ENCODE measurements at regions of chr6 and their contacts with region 1.

Region 1: GRCh38 chr6:90940812-90941481 is 354.1 kb upstream of the MAP3K7 start:
- DNase-seq: peak; percentile 10
- H3K4me3 Mint-ChIP-seq: no peak overlapping the region
- H3K27ac Mint-ChIP-seq: no peak overlapping the region
- H3K4me1 Mint-ChIP-seq: peaks cover 5% of the 10 kb centered on the region
- H3K27me3 Mint-ChIP-seq: no peaks in the 10 kb centered on the region

Region 2: DNA sequence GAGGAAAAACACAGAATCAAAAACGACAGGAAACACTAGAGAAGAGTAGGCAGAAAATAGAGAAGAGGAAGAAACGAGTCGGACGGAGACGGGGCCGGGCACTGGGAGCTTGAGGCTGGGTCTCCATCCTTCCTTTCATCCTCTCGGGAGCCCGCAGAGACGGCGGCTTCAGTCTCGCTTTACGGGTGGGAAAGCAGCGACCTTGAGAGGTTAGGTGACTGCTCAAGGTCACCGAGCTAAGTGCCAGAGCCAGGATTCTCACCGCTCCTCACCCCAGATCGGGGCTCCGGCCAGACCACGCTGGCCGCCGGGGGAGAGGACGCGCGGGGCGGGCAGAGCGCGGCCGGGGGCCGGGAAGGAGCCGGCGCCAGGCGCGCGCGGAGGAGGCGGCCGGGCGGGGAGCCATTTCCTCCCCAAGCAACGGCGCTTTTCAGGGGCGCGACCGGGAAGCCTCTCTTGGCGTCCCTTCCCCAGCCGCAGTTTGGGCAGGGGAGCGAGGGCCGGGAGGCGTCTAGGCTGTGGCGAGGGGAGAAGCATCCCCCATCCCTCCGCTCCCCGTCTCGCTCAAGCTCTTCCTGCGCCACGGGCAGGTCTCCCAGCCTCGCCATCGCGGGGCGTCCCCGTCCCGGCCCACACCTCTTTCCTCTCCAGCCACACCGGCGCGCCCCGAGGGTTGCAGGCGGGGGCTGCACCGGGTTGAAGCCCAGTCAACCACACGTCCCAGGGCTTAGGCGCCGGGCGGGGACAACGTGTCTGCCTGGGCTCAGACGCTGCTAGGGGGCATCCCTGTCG is 330.0 kb before region 1 on chr6:
- CTCF ChIA-PET with region 1: no interaction called
- intact Hi-C with region 1: loop called (anchors 1 kb)
- DNase-seq: peak; percentile 54
- H3K4me3 Mint-ChIP-seq: peak overlapping the region; percentile 80
- H3K27ac Mint-ChIP-seq: no peak overlapping the region
- H3K4me1 Mint-ChIP-seq: peaks cover 11% of the 10 kb centered on the region
- H3K27me3 Mint-ChIP-seq: peaks cover 39% of the 10 kb centered on the region

Region 3: GRCh38 chr6:91081452-91082067 is 140.6 kb after region 1 on chr6:
- CTCF ChIA-PET with region 1: interaction called, 4 read pairs
- intact Hi-C with region 1: loop called (anchors 2 kb)
- DNase-seq: no peak
- H3K4me3 Mint-ChIP-seq: no peak overlapping the region
- H3K27ac Mint-ChIP-seq: no peak overlapping the region
- H3K4me1 Mint-ChIP-seq: no peaks in the 10 kb centered on the region
- H3K27me3 Mint-ChIP-seq: no peaks in the 10 kb centered on the region

Region 4: GRCh38 chr6:91276315-91276714 is 335.4 kb after region 1 on chr6:
- CTCF ChIA-PET with region 1: interaction called, 3 read pairs
- intact Hi-C with region 1: loop called (anchors 5 kb)
- DNase-seq: no peak
- H3K4me3 Mint-ChIP-seq: no peak overlapping the region
- H3K27ac Mint-ChIP-seq: no peak overlapping the region
- H3K4me1 Mint-ChIP-seq: no peaks in the 10 kb centered on the region
- H3K27me3 Mint-ChIP-seq: no peaks in the 10 kb centered on the region